Activated CD8-positive, alpha-beta T cell treated with anti-CD3 and anti-CD28 coated beads for 36 hours (primary cell): ENCODE measurements at regions of chr6 and their contacts with region 1.

Region 1: DNA sequence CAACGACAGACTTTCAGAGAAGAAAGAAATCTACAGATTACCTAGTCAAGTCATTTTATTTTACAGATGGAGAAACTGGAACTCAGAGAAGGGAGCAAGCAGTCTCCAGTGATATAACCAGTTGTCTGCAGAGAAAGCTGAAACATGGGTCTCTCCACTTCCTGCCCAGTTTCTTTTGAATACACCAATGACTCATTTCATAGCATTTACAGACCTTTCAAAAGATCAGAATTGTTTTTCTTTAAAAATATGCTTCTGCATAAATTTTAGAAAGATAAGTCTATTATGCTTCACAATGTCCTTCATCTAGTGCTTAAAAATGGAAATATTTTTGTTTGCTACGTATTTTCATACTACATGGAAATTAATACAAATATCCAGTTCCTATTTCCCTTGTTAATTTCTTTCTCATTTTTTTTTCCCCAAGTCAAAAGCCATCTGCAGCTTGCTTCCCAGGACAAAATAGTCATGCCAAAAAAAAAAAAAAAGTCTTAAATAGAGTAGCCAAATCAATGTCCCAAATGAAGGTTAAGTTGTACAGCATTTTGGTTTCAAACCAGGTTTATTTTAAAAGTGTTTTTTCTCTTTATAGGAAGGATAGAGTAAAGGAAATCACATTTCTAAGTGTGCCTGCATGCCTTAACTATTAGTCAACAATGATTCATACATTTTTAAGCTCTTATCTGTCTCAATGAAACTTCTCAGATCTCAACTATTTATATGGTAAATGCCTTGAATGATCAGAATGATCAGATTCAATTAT is 36.9 kb downstream of the ARHGAP18 start:
- DNase-seq: peak; percentile 49
- ATAC-seq: peak; percentile 63
- H3K4me3 Mint-ChIP-seq: peak overlapping the region; percentile 59
- H3K27ac Mint-ChIP-seq: peak overlapping the region; percentile 94
- H3K4me1 Mint-ChIP-seq: peaks cover 47% of the 10 kb centered on the region
- H3K27me3 Mint-ChIP-seq: no peaks in the 10 kb centered on the region
- CTCF ChIP-seq: no peak

Region 2: GRCh38 chr6:129490521-129491245 is 182.4 kb before region 1 on chr6:
- CTCF ChIA-PET with region 1: no interaction called
- POLR2A ChIA-PET with region 1: no interaction called
- intact Hi-C with region 1: loop called (anchors 5 kb)
- DNase-seq: peak; percentile 74
- ATAC-seq: peak; percentile 86
- H3K4me3 Mint-ChIP-seq: peak overlapping the region; percentile 63
- H3K27ac Mint-ChIP-seq: peak overlapping the region; percentile 98
- H3K4me1 Mint-ChIP-seq: peaks cover 70% of the 10 kb centered on the region
- H3K27me3 Mint-ChIP-seq: no peaks in the 10 kb centered on the region
- CTCF ChIP-seq: no peak

Region 3: GRCh38 chr6:129606664-129607063 is 66.4 kb before region 1 on chr6:
- CTCF ChIA-PET with region 1: no interaction called
- POLR2A ChIA-PET with region 1: no interaction called
- intact Hi-C with region 1: no loop called
- DNase-seq: no peak
- ATAC-seq: peak; percentile 61
- H3K4me3 Mint-ChIP-seq: no peak overlapping the region
- H3K27ac Mint-ChIP-seq: no peak overlapping the region
- H3K4me1 Mint-ChIP-seq: peaks cover 2% of the 10 kb centered on the region
- H3K27me3 Mint-ChIP-seq: no peaks in the 10 kb centered on the region
- CTCF ChIP-seq: no peak

Region 4: DNA sequence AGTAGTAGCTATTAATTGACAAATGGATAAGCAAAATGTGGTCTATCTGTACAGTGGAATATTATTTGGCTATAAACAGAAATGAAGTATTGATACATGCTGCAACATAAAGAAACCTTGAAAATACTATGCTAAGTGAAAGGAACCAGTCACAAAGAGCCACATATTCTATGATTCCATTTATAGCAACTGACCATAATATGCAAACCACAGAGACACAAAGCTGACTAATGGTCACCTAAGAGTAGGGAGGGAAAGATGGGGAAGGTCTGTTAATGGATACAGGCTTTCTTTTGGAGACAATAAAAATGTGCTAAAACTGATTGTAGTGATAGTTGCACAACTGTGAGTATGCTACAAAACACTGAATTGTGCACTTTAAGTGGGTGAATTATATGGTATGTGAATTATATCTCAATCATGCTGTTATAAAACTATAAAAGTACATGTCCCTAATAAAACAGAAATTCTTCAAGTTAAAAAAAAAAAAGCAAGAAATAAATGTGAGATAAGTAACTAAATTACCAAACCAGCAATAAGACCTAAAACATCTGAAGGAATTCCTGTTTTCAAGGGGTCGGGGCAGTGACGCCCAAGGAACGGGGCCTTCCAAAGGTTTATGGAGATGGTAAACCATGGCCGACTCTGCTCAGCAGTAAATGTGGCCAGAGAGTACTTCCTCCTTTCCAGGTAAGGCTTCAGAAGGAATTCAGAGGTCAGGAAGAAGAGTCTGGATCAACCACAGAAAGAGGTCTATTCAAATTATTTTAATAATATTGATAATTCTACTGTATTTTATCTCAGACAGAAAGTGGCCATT is 38.4 kb before region 1 on chr6:
- CTCF ChIA-PET with region 1: no interaction called
- POLR2A ChIA-PET with region 1: no interaction called
- intact Hi-C with region 1: no loop called
- DNase-seq: no peak
- ATAC-seq: no peak
- H3K4me3 Mint-ChIP-seq: no peak overlapping the region
- H3K27ac Mint-ChIP-seq: no peak overlapping the region
- H3K4me1 Mint-ChIP-seq: peaks cover 7% of the 10 kb centered on the region
- H3K27me3 Mint-ChIP-seq: no peaks in the 10 kb centered on the region
- CTCF ChIP-seq: no peak

Region 5: DNA sequence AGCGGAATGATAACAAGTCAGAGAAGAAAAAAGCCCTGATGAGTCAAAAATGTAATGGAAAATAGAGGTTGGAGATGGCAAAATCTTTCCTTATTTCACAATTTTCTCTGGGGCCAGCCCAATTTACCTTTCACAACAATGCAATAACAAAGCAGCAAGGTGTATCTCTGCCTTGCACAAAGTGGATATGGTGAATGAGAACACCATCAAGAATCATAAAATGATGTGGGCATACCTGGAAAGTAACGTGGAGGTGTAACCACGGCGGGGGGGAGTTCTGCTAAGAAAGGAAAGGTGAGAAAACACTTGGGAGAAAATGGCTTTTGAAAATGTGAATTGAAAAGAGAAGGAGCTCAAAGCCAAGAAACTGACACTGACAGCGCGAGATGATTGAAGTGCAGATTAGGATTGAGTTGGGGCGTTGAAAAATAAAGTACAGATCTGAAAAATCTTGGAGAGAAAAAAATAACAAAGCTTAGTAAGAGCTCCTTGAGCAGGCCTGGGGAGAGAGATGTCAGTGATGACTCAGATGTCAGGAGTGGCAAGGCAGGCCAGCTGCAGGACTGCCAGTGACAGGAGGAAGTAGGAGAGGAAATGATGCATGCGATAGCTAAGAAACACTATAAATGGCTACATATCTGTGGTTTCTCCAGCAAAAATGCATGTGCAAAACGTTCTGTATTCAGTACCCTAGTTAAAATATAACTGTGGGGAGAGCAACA is 10.7 kb after region 1 on chr6:
- CTCF ChIA-PET with region 1: interaction called, 34 read pairs
- POLR2A ChIA-PET with region 1: interaction called, 9 read pairs
- intact Hi-C with region 1: no loop called
- DNase-seq: peak; percentile 80
- ATAC-seq: peak; percentile 93
- H3K4me3 Mint-ChIP-seq: peak overlapping the region; percentile 45
- H3K27ac Mint-ChIP-seq: peak overlapping the region; percentile 91
- H3K4me1 Mint-ChIP-seq: peaks cover 50% of the 10 kb centered on the region
- H3K27me3 Mint-ChIP-seq: no peaks in the 10 kb centered on the region
- CTCF ChIP-seq: no peak

Region 6: GRCh38 chr6:129709769-129710449 is 36.8 kb after region 1 on chr6 and contains the start of gene ARHGAP18:
- CTCF ChIA-PET with region 1: interaction called, 5 read pairs
- POLR2A ChIA-PET with region 1: no interaction called
- intact Hi-C with region 1: loop called (anchors 5 kb)
- DNase-seq: peak; percentile 82
- ATAC-seq: peak; percentile 97
- H3K4me3 Mint-ChIP-seq: peak within 1 kb of the TSS; percentile 92
- H3K27ac Mint-ChIP-seq: peak within 1 kb of the TSS; percentile 80
- H3K4me1 Mint-ChIP-seq: peaks cover 37% of the 10 kb centered on the region
- H3K27me3 Mint-ChIP-seq: peaks cover 7% of the 10 kb centered on the region
- CTCF ChIP-seq: no peak
- total RNA-seq, gene ARHGAP18: 8.2 to 9.6 TPM